PC-9 (cell line): ENCODE measurements at regions of chr16 and their contacts with region 1.

Region 1: GRCh38 chr16:57519796-57520360 is 16.5 kb downstream of the CCDC102A start:
- DNase-seq: peak in 1 of 2 experiments; percentile 64
- H3K4me3 ChIP-seq: no peak overlapping the region
- H3K27ac ChIP-seq: no peak overlapping the region
- H3K4me1 ChIP-seq: no peaks in the 10 kb centered on the region
- H3K27me3 ChIP-seq: no peaks in the 10 kb centered on the region
- CTCF ChIP-seq: peak; percentile 96

Region 2: DNA sequence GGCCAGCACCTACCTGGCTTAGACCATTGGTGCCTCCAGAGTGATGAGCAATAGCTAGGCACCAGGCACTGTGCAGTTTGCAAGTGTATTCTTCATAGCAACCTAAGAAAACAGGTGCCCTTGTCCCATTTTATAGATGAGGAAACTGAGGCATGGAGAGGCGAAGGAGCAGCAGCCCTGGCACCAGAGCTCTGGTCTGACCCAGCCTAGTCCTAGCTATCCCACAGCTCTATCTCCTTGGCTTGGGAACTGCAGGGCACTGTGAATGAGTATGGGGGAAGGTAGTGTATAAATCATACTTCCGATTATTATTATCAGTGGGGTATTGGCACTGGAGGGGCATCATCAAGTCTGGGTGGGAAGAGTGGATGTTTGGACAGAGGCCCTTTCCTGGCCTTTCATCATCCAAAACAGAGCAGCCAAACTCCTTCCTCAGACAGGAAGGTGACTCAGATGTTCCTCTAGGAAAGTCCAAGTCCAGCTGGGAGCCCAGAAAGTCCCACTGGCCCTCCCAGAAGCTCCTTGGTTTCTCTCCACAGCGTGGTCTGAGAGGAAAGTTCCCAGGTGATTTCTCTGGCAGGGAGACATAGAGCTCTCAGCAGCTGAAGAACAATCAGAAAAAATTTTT is 203.4 kb before region 1 on chr16:
- CTCF ChIA-PET with region 1: interaction called, 12 read pairs
- POLR2A ChIA-PET with region 1: no interaction called
- intact Hi-C with region 1: no loop called
- DNase-seq: no peak
- H3K4me3 ChIP-seq: no peak overlapping the region
- H3K27ac ChIP-seq: peak overlapping the region; percentile 48
- H3K4me1 ChIP-seq: peaks cover 28% of the 10 kb centered on the region
- H3K27me3 ChIP-seq: no peaks in the 10 kb centered on the region
- CTCF ChIP-seq: no peak